CD8-positive, alpha-beta T cell (primary cell): ENCODE measurements at regions of chr7 and their contacts with region 1.

Region 1: DNA sequence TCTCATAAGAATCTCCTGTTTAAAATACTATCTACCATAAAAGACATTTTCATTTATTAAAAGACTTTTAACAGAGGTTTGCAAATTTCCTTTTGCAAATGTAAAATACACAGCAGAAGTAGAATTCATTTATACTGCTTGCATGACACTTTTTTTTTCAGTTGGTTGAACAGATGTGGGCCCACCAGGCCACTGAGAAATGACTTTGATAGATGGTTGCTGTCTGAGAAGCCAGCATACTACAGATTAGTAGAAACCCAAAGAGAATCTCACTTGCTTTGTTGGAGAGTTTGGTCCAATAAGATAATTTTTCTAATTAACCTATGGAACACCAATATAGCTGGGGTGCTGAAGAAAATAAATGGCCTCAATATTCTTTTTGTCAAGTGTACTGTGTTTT is 66.3 kb downstream of the PHF14 start:
- DNase-seq: no peak
- ATAC-seq: no peak
- H3K4me3 ChIP-seq: no peak overlapping the region
- H3K4me3 Mint-ChIP-seq: no peak overlapping the region
- H3K27ac ChIP-seq: no peak overlapping the region
- H3K27ac Mint-ChIP-seq: no peak overlapping the region
- H3K4me1 ChIP-seq: no peaks in the 10 kb centered on the region
- H3K4me1 Mint-ChIP-seq: no peaks in the 10 kb centered on the region
- H3K27me3 ChIP-seq: no peaks in the 10 kb centered on the region
- H3K27me3 Mint-ChIP-seq: no peaks in the 10 kb centered on the region
- CTCF ChIP-seq: no peak

Region 2: GRCh38 chr7:10507032-10507431 is 532.9 kb before region 1 on chr7:
- CTCF ChIA-PET with region 1: no interaction called
- POLR2A ChIA-PET with region 1: no interaction called
- intact Hi-C with region 1: no loop called
- DNase-seq: no peak
- ATAC-seq: no peak
- H3K4me3 ChIP-seq: no peak overlapping the region
- H3K4me3 Mint-ChIP-seq: no peak overlapping the region
- H3K27ac ChIP-seq: no peak overlapping the region
- H3K27ac Mint-ChIP-seq: no peak overlapping the region
- H3K4me1 ChIP-seq: no peaks in the 10 kb centered on the region
- H3K4me1 Mint-ChIP-seq: no peaks in the 10 kb centered on the region
- H3K27me3 ChIP-seq: no peaks in the 10 kb centered on the region
- H3K27me3 Mint-ChIP-seq: no peaks in the 10 kb centered on the region
- CTCF ChIP-seq: no peak

Region 3: DNA sequence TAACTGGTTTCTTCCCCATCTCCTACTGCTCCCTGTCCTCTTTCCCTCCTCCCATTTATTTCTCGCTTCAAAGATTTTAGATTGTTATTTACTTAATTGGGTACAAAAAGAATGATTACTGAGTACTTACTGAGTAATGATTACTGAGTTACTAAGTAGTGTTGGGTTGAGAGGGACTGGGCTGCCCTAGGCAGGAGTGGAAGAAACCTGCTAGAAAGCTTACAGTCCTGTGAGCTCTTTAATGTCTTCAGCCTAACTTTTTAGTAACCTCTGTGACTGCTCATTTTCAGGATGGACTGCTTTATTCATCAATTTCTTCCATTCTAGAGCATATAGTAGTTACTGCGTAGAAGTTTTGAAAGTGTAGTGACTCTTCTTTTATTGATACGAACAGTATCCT is 58.7 kb before region 1 on chr7:
- CTCF ChIA-PET with region 1: no interaction called
- POLR2A ChIA-PET with region 1: no interaction called
- intact Hi-C with region 1: loop called in 1 of 2 experiments (anchors 2 kb)
- DNase-seq: no peak
- ATAC-seq: no peak
- H3K4me3 ChIP-seq: no peak overlapping the region
- H3K4me3 Mint-ChIP-seq: no peak overlapping the region
- H3K27ac ChIP-seq: no peak overlapping the region
- H3K27ac Mint-ChIP-seq: no peak overlapping the region
- H3K4me1 ChIP-seq: peaks cover 5% of the 10 kb centered on the region
- H3K4me1 Mint-ChIP-seq: peaks cover 69% of the 10 kb centered on the region
- H3K27me3 ChIP-seq: no peaks in the 10 kb centered on the region
- H3K27me3 Mint-ChIP-seq: no peaks in the 10 kb centered on the region
- CTCF ChIP-seq: no peak

Region 4: DNA sequence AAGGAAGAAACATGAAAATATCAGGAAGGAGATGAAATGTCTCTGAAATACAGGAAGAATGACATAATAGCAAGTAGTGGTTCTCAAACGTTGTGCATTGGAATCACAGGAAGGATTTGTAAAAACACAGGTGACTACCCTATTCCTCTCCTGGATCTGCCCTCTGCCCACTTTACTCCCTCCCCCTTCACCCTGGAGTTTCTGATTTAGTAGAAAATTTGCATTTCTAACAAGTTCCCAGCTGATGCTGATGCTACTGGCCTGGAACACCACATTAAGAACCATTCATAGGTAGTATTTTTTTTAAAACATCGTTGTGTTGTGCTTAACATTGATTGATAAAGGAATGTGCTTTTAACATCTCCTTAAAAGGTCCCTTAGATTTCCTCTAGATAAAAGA is 64.6 kb after region 1 on chr7:
- CTCF ChIA-PET with region 1: no interaction called
- POLR2A ChIA-PET with region 1: no interaction called
- intact Hi-C with region 1: no loop called
- DNase-seq: no peak
- ATAC-seq: no peak
- H3K4me3 ChIP-seq: no peak overlapping the region
- H3K4me3 Mint-ChIP-seq: no peak overlapping the region
- H3K27ac ChIP-seq: no peak overlapping the region
- H3K27ac Mint-ChIP-seq: no peak overlapping the region
- H3K4me1 ChIP-seq: no peaks in the 10 kb centered on the region
- H3K4me1 Mint-ChIP-seq: no peaks in the 10 kb centered on the region
- H3K27me3 ChIP-seq: no peaks in the 10 kb centered on the region
- H3K27me3 Mint-ChIP-seq: no peaks in the 10 kb centered on the region
- CTCF ChIP-seq: no peak

Region 5: DNA sequence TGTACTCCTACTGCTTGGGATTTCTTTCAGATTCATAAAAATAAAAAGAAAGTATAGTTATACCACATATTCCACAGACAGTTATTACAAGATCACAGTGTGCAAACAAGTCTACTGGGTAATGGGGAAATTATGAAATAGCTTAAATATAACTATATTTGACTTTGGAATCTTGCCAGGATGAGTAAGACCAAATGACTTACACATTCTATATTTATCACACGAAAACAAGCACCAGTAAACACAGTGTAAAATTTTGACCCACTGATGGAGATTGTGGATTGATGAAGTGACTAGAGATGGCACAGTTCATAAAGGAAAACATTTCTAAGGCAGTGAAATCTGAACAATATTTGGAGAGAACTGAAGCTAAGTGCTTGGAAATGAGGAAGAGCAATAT is 452.3 kb after region 1 on chr7:
- CTCF ChIA-PET with region 1: no interaction called
- POLR2A ChIA-PET with region 1: no interaction called
- intact Hi-C with region 1: no loop called
- DNase-seq: no peak
- ATAC-seq: no peak
- H3K4me3 ChIP-seq: no peak overlapping the region
- H3K4me3 Mint-ChIP-seq: no peak overlapping the region
- H3K27ac ChIP-seq: no peak overlapping the region
- H3K27ac Mint-ChIP-seq: no peak overlapping the region
- H3K4me1 ChIP-seq: no peaks in the 10 kb centered on the region
- H3K4me1 Mint-ChIP-seq: no peaks in the 10 kb centered on the region
- H3K27me3 ChIP-seq: no peaks in the 10 kb centered on the region
- H3K27me3 Mint-ChIP-seq: no peaks in the 10 kb centered on the region
- CTCF ChIP-seq: no peak

Region 6: DNA sequence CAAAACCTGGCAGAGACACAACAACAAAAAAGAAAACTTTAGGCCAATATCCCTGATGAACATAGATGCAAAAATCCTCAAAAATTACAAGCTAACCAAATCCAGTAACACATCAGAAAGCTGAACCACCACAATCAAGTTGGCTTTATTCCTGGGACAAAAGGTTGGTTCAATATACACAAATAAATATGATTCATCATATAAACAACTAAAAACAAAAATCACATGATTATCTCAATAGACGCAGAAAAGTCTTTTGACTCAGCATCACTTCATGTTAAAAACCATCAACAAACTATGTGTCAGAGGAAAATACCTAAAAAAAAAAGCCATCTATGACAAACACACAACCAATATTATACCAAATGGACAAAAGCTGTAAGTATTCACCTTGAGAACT is 508.6 kb after region 1 on chr7:
- CTCF ChIA-PET with region 1: no interaction called
- POLR2A ChIA-PET with region 1: no interaction called
- intact Hi-C with region 1: no loop called
- DNase-seq: no peak
- ATAC-seq: no peak
- H3K4me3 ChIP-seq: no peak overlapping the region
- H3K4me3 Mint-ChIP-seq: no peak overlapping the region
- H3K27ac ChIP-seq: no peak overlapping the region
- H3K27ac Mint-ChIP-seq: no peak overlapping the region
- H3K4me1 ChIP-seq: no peaks in the 10 kb centered on the region
- H3K4me1 Mint-ChIP-seq: no peaks in the 10 kb centered on the region
- H3K27me3 ChIP-seq: no peaks in the 10 kb centered on the region
- H3K27me3 Mint-ChIP-seq: no peaks in the 10 kb centered on the region
- CTCF ChIP-seq: no peak